Natural killer cell (primary cell): ENCODE measurements at regions of chr4 and their contacts with region 1.

Region 1: DNA sequence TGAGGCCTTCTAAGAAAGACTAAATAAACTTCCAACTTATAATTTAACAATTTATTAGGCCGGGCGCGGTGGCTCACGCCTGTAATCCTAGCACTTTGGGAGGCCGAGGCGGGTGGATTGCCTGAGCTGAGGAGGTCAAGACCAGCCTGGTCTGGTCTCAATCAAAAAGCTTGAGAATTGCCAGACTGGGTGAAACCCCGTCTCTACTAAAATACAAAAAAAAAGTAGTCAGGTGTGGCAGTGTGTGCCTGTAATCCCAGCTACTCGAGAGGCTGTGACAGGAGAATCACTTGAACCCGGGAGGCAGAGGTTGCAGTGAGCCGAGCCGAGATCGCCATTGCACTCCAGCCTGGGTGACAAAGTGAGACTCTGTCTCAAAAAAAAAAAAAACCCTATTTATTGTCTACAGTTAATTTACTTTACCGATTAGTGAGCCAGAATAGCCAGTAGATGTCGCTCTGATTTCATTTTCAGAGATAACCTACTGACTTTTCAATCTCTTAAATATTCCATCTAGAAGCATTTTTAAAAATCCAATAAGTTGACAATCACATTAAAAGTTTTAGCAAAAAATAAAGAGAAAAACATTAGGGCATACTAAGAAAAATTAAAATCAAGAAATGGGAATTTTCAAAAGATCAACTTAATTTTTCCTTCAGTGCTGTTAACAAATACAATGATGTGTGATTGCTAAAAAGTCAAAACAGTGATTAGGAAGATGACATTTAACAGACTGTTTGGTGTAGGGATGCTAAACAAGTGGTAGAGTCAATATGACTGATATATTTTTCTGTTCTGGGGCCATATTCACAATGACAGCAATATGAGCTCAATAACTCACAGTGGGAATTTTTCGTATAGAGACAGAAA is 4.3 kb upstream of the SHROOM3 start:
- DNase-seq: peak in 1 of 2 donors; percentile 64
- ATAC-seq: peak in 2 of 3 donors; percentile 62 to 66
- H3K4me3 ChIP-seq: no peak overlapping the region
- H3K4me3 Mint-ChIP-seq: no peak overlapping the region
- H3K27ac ChIP-seq: no peak overlapping the region
- H3K27ac Mint-ChIP-seq: no peak overlapping the region
- H3K4me1 ChIP-seq: no peaks in the 10 kb centered on the region
- H3K4me1 Mint-ChIP-seq: peaks cover 8% of the 10 kb centered on the region in 2 donors
- H3K27me3 ChIP-seq: no peaks in the 10 kb centered on the region
- H3K27me3 Mint-ChIP-seq: peaks cover 12 to 26% of the 10 kb centered on the region in 2 donors
- CTCF ChIP-seq: peak; percentile 81

Region 2: DNA sequence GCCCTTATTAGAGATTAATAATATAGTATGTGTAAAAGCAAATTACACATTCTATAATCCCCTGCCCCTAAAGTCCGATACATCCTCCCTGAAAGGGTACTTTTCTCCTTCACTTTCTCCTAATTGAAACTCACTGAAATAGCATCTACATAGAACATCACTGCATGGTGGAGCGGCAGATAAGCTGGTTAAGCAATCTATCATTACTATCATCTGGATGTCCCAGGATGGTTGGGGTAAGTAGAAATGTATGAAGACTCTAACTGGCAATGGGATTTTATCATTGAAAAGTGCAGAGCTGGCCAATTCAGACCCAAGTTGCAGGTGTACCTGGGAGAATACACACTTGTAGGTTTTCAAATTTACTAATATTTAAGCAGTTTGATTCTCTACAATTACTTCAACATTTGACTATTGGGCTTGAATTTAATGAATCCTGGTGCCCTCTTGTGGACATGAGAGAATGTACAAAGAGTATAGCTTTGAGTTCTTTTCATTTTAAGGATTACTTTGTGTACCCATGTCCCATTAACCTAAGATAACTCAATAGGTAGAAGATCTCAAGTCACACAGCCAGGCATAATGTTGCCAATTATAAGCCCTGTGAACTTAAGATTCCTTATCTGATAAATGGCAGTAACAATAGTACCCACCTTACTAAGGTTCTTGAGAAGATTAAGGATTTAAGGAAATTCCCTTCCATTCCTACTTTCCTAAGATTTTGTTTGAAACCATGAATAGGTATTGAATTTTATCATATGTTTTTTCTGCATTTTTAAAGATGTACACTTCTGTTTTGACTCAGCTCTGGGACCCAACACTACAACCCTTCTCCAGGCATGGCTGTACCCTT is 74.1 kb after region 1 on chr4:
- intact Hi-C with region 1: loop called (anchors 1 kb)
- DNase-seq: peak in 1 of 2 donors; percentile 61
- ATAC-seq: peak; percentile 53 to 65 (median 55)
- H3K4me3 ChIP-seq: no peak overlapping the region
- H3K4me3 Mint-ChIP-seq: no peak overlapping the region
- H3K27ac ChIP-seq: no peak overlapping the region
- H3K27ac Mint-ChIP-seq: no peak overlapping the region
- H3K4me1 ChIP-seq: no peaks in the 10 kb centered on the region
- H3K4me1 Mint-ChIP-seq: no peaks in the 10 kb centered on the region
- H3K27me3 ChIP-seq: no peaks in the 10 kb centered on the region
- H3K27me3 Mint-ChIP-seq: peaks cover 0 to 6% of the 10 kb centered on the region in 2 donors
- CTCF ChIP-seq: peak; percentile 76

Region 3: GRCh38 chr4:76758290-76758882 is 327.6 kb after region 1 on chr4:
- intact Hi-C with region 1: loop called (anchors 5 kb)
- DNase-seq: peak in 1 of 2 donors; percentile 37
- ATAC-seq: peak in 1 of 3 donors; percentile 44
- H3K4me3 ChIP-seq: no peak overlapping the region
- H3K4me3 Mint-ChIP-seq: no peak overlapping the region
- H3K27ac ChIP-seq: no peak overlapping the region
- H3K27ac Mint-ChIP-seq: no peak overlapping the region
- H3K4me1 ChIP-seq: no peaks in the 10 kb centered on the region
- H3K4me1 Mint-ChIP-seq: no peaks in the 10 kb centered on the region
- H3K27me3 ChIP-seq: no peaks in the 10 kb centered on the region
- H3K27me3 Mint-ChIP-seq: peaks cover 6 to 7% of the 10 kb centered on the region in 2 donors
- CTCF ChIP-seq: peak; percentile 67

Region 4: GRCh38 chr4:77044461-77045150 is 613.9 kb after region 1 on chr4:
- intact Hi-C with region 1: loop called (anchors 5 kb)
- DNase-seq: peak in 1 of 2 donors; percentile 67
- ATAC-seq: peak in 2 of 3 donors; percentile 21 to 48
- H3K4me3 ChIP-seq: no peak overlapping the region
- H3K4me3 Mint-ChIP-seq: no peak overlapping the region
- H3K27ac ChIP-seq: no peak overlapping the region
- H3K27ac Mint-ChIP-seq: peak overlapping the region; percentile 6 to 64
- H3K4me1 ChIP-seq: no peaks in the 10 kb centered on the region
- H3K4me1 Mint-ChIP-seq: peaks cover 9 to 13% of the 10 kb centered on the region in 2 donors
- H3K27me3 ChIP-seq: no peaks in the 10 kb centered on the region
- H3K27me3 Mint-ChIP-seq: no peaks in the 10 kb centered on the region
- CTCF ChIP-seq: peak; percentile 62